ENCODE measurements at regions of chr1 and their contacts with region 1.

Region 1: GRCh38 chr1:82279241-82279640 is 478.5 kb downstream of the ADGRL2 start:
- DNase-seq: peak; percentile 13
- ATAC-seq: peak; percentile 88
- H3K4me3 ChIP-seq: no peak overlapping the region
- H3K27ac ChIP-seq: no peak overlapping the region
- H3K4me1 ChIP-seq: no peaks in the 10 kb centered on the region
- H3K27me3 ChIP-seq: no peaks in the 10 kb centered on the region
- CTCF ChIP-seq: no peak
- EP300 ChIP-seq: 0 out of 4 replicates have a peak, but pooled peaks of 1 of the 2 experiments have one; percentile 27
- POLR2A ChIP-seq: no peak
- RAD21 ChIP-seq: no peak

Region 2: DNA sequence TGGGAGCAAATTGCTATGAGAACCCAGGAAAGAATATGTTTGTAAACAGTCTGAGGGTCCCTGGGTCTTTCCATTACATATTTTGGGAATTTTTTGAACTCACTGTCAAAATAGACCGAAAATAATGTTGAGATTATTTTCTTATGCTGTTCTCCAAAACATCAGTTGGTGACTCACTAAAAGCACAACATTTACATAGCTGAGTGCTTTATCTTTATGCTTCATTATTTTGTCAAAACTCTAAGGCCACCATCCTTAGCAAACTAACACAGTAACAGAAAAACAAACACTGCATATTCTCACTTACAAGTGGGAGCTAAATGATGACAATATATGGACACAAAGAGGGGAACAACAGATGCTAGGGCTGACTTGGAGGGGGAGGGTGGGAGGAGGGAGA is 19.2 kb before region 1 on chr1:
- CTCF ChIA-PET with region 1: interaction called, 4 read pairs
- POLR2A ChIA-PET with region 1: interaction called, 3 read pairs
- RAD21 ChIA-PET with region 1: interaction called, 12 read pairs
- SMC1A ChIA-PET with region 1: interaction called, 114 read pairs
- in situ Hi-C with region 1: no loop called
- intact Hi-C with region 1: no loop called
- DNase-seq: no peak
- ATAC-seq: no peak
- H3K4me3 ChIP-seq: no peak overlapping the region
- H3K27ac ChIP-seq: no peak overlapping the region
- H3K4me1 ChIP-seq: no peaks in the 10 kb centered on the region
- H3K27me3 ChIP-seq: no peaks in the 10 kb centered on the region
- CTCF ChIP-seq: no peak
- EP300 ChIP-seq: no peak
- POLR2A ChIP-seq: no peak
- RAD21 ChIP-seq: no peak

Measured in GM12878 (cell line).